ENCODE measurements at regions of chr10 and their contacts with region 1.

Region 1: DNA sequence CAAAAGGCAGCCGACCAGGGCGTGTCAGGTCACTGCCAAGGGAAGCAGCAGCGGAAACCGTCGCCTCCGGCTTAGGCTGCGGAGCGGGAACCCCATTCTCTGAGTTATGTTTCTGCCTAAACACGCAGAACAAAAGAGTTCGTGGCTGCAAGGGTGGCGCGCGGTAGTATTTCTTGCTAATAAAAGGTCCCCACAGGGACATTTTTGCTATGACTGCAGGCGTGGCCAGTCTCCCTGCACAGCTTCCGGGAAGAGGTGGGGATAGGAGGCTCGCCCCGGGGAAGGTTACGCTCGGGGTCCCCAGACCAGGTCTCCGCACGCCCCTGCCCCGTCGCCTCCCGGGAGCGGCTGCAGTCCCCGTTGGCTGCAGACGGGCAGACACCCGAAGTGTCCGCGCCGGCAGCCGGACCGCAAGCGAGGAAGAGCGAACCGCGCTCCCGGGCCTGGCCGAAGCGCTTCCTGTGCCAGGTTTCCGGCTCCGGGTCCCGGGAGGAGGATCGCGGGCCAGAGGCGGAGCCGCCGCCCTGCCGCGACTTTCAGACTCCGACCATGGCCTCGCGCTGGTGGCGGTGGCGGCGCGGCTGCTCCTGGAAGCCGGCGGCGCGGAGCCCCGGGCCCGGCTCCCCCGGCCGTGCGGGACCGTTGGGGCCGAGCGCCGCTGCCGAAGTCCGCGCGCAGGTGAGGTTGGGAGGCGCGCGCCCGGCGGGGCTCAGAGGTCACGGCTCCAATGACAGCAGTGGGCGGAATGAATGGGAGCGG is at the start of gene PDSS1:
- DNase-seq: peak; percentile 92
- H3K4me3 Mint-ChIP-seq: peak within 1 kb of the TSS; percentile 99
- H3K27ac Mint-ChIP-seq: peak within 1 kb of the TSS; percentile 97
- H3K4me1 Mint-ChIP-seq: peaks cover 31% of the 10 kb centered on the region
- H3K27me3 Mint-ChIP-seq: no peaks in the 10 kb centered on the region
- total RNA-seq, gene PDSS1: 39.0 and 39.8 TPM in 2 replicates

Region 2: DNA sequence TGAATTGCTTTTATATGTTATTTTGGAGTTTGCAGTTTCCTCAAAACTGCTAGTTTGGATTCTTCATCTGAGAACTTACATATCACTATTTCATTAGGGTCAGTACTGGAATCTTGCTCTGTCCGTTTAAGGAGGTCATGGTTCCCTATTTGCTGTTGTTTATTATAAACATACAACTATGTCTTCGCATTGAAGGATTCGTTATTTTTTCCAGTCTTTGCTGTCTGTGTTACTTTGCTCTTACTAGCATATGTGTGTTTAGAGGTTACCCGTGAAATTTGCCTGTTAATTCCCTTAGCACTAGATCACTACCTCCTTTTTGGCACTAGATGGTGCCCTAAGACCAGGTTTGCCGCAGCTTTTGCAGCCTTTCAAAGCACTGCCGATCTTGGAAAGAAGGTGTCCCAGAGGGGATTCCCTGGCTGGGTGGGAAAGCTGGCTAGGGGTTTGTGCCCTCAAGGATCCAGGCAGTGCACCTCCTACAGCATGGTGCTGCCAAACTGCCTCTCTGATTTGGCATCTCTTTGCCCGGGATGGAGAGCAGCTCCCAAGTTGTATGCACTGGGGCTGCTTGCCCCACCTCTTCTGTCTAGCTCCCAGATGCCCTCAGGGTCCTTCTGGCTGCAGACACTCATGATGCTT is 362.3 kb before region 1 on chr10:
- intact Hi-C with region 1: loop called (anchors 10 kb)
- DNase-seq: peak; percentile 89
- H3K4me3 Mint-ChIP-seq: peak overlapping the region; percentile 68
- H3K27ac Mint-ChIP-seq: peak overlapping the region; percentile 38
- H3K4me1 Mint-ChIP-seq: peaks cover 8% of the 10 kb centered on the region
- H3K27me3 Mint-ChIP-seq: peaks cover 3% of the 10 kb centered on the region

Region 3: DNA sequence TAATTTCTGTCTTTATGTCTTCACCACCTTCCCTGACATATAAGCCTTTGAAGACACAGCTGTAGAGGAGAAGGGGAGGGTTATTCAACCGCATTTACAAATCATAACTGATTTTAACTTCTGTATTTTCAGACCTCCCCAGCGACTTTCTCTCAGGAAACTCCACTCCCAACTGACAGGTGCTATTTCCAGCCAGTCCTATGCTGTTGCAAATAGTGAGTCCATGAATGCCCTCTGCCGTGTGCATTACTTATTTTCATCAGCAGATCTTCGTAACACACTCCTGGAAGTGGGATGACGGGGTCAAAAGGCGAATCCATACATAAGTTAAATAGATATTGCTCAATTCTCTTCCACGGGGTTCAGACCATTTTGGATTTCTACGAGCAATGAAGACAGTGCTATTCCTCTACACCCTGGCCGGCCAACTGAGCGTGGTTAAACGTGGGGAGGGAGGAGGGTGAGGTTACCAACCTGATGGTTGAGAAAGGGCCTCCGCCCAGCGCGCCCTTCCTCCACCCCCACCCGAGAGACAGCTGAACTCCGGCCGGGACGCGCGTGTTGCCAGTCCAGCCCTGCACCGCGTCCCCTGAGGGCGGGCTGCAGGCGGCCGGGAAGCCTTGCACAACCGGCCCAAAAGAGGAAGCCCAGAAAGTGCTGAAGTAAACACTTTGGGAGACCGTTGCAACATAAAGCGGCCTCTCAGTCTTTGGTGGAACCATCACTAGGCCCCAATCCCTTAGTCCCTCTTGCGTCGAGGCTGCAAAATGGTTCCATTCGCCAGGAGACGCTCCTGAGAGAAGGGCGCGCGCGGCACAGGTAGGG is 259.5 kb before region 1 on chr10 and contains the start of gene APBB1IP:
- intact Hi-C with region 1: loop called (anchors 5 kb)
- DNase-seq: peak; percentile 87
- H3K4me3 Mint-ChIP-seq: peak within 1 kb of the TSS; percentile 92
- H3K27ac Mint-ChIP-seq: peak within 1 kb of the TSS; percentile 95
- H3K4me1 Mint-ChIP-seq: peaks cover 37% of the 10 kb centered on the region
- H3K27me3 Mint-ChIP-seq: no peaks in the 10 kb centered on the region
- total RNA-seq, gene APBB1IP: 40.0 and 41.3 TPM in 2 replicates

Region 4: DNA sequence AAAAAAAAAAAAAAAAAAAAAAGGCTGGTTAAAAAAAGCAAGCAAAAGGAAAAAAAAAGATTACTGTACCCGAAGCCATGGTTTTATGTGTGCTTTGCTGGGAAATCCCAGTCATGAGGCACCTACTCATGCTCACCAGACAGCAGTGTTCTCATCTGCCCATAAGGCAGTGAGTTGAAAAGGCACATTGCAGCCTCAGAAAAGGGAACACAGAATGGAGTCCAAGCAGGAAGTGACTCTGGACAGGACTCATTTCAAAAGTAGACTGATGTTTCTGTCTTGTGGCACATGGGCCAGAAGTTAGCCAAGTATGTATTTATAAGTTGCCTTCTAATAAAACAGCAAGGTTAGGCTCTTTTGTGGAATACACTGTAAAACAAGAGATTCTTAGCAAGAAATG is 40.4 kb after region 1 on chr10:
- intact Hi-C with region 1: loop called (anchors 2 kb)
- DNase-seq: peak; percentile 83
- H3K4me3 Mint-ChIP-seq: peak overlapping the region; percentile 47
- H3K27ac Mint-ChIP-seq: peak overlapping the region; percentile 98
- H3K4me1 Mint-ChIP-seq: peaks cover 42% of the 10 kb centered on the region
- H3K27me3 Mint-ChIP-seq: no peaks in the 10 kb centered on the region

Region 5: DNA sequence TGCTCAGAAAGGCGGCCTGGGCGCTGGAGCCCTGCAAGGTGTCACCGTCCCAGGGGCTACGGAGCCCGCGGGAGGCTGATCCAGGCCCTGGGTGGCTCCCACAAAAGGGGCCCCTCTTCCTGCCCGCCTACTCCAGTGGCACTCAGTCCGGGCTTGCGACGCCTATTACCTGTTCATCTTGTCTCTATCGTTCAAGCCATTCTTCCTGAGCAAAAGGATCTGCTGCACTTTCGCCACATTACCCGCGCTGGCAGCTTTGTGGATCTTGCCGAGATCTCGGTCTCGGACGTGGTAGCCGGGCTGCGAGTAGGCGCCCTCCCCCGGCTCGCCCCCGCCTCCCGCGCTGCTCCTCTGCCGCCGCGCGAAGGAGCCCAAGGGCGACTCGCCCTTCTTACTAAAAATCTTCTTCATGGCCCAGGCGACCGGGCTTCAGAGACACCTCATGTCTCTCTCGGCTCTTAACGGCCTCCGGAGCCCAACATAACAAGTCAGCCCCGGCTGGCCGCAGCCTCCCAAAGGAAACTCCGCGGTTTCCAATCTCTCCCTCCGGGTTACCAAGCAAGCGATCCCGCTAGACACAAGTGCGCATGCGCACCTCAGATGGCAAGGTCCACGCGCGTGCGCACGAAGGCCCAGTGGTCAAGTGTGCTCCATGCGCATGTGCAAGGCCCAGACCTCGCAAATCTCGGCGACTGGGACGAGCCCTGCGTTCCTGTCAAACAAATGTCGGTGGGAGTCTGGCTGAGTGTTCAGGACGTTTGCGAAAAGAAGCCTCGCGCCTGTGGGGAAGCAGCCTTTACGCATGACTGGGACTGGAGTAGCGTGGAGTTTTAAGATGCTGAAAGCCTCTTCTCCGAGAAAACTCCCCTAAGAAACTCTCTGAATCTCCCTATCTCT is 402.8 kb after region 1 on chr10 and contains the start of gene ANKRD26:
- intact Hi-C with region 1: loop called (anchors 5 kb)
- DNase-seq: peak; percentile 99
- H3K4me3 Mint-ChIP-seq: peak within 1 kb of the TSS; percentile 85
- H3K27ac Mint-ChIP-seq: peak within 1 kb of the TSS; percentile 94
- H3K4me1 Mint-ChIP-seq: peaks cover 41% of the 10 kb centered on the region
- H3K27me3 Mint-ChIP-seq: peaks cover 2% of the 10 kb centered on the region
- total RNA-seq, gene ANKRD26: 5.3 and 5.8 TPM in 2 replicates

Region 6: GRCh38 chr10:27504007-27504807 is 806.9 kb after region 1 on chr10 and contains the start of gene RAB18:
- intact Hi-C with region 1: loop called (anchors 5 kb)
- DNase-seq: peak; percentile 99
- H3K4me3 Mint-ChIP-seq: peak within 1 kb of the TSS; percentile 99
- H3K27ac Mint-ChIP-seq: peak within 1 kb of the TSS; percentile 98
- H3K4me1 Mint-ChIP-seq: peaks cover 44% of the 10 kb centered on the region
- H3K27me3 Mint-ChIP-seq: peaks cover 6% of the 10 kb centered on the region
- total RNA-seq, gene RAB18: 55.4 and 58.3 TPM in 2 replicates

Measured in activated CD4-positive, alpha-beta T cell treated with anti-CD3 and anti-CD28 coated beads, Interleukin-2, amount 10 ng/mL, durations not matched to agents 24 days and 14 days (primary cell).